GM18951 (cell line): ENCODE measurements at regions of chr22 and their contacts with region 1.

Region 1: GRCh38 chr22:36461669-36462649 is 19.5 kb downstream of the TXN2 start:
- POLR2A ChIP-seq: no peak

Region 2: GRCh38 chr22:36301384-36301828 is 160.6 kb before region 1 on chr22:
- in situ Hi-C with region 1: loop called (anchors 10 kb)
- POLR2A ChIP-seq: no peak